ENCODE measurements at regions of chr15 and their contacts with region 1.

Region 1: DNA sequence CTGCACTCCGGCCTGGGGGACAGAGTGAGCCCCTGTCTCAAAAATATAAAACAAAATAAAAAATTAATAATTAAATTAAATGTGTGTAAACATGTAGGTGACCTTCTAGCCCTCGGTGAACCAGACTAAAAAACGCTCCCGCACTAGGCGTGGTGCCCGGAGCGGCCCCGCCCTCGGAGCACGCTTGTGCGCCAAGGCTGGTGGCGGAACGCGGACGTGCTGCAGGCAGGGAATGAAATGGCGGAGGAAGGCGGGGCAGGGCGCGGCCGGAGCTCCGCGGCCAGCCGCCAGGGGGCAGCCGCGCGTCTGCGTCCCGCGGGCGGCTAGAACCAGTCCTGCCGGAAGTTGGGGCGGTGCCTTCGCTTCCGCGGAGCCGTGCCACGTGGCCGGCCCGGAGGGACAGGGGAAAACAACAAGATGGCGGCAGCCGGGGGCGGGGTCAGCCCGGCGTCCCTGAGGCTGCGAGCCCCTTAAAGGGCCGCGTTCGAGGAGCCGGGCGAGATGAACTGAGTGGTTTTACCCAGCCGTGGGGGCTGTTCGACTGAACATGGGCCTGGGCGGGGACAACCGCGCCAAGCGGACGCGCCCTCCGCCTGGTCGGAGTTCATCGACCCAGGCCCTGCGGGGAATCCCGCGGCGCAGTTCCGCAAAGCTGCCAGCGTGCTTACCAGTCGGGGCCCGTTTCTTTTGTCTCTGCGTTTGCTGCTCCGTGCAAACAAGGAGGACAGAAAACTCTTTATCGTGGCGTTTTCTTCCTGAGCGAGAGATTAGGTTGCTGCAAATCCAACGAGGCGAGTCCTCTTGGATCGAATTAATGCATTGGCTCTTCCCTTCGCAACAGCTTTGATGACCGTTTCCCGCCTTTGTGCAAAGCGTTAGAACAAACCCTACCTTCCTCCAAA is 90.9 kb upstream of the CHD2 start:
- DNase-seq: peak; percentile 98 to 99
- H3K4me3 ChIP-seq: peak overlapping the region; percentile 46
- H3K4me3 Mint-ChIP-seq: peak overlapping the region; percentile 97
- H3K27ac Mint-ChIP-seq: peak overlapping the region; percentile 96
- H3K4me1 ChIP-seq: peaks cover 27% of the 10 kb centered on the region
- H3K4me1 Mint-ChIP-seq: peaks cover 9% of the 10 kb centered on the region
- H3K27me3 ChIP-seq: no peaks in the 10 kb centered on the region
- H3K27me3 Mint-ChIP-seq: no peaks in the 10 kb centered on the region
- CTCF ChIP-seq: peak; percentile 32 to 93

Region 2: DNA sequence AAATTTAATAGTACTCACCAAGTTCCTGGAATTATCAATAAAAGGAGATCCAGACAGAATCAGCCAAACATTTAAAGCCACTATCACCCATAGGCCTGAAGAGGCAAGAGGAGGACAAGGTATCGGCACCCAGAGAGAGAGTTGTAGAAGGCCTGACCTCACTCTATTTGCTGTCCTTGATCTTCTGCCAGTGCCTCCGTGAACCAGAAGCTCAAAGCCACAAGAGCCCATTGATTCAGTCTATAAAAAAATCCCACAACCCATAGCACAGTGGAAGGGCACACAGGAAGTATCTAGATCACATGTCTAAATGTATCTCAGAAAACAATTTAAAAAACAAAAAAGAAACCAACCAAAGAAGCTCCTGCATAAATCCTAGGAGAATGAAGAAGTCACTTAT is 85.1 kb before region 1 on chr15:
- CTCF ChIA-PET with region 1: no interaction called
- POLR2A ChIA-PET with region 1: no interaction called
- intact Hi-C with region 1: no loop called
- DNase-seq: no peak
- H3K4me3 ChIP-seq: no peak overlapping the region
- H3K4me3 Mint-ChIP-seq: no peak overlapping the region
- H3K27ac Mint-ChIP-seq: no peak overlapping the region
- H3K4me1 ChIP-seq: peaks cover 9% of the 10 kb centered on the region
- H3K4me1 Mint-ChIP-seq: peaks cover 25% of the 10 kb centered on the region
- H3K27me3 ChIP-seq: no peaks in the 10 kb centered on the region
- H3K27me3 Mint-ChIP-seq: no peaks in the 10 kb centered on the region
- CTCF ChIP-seq: no peak

Region 3: GRCh38 chr15:92780843-92781242 is 28.4 kb before region 1 on chr15:
- CTCF ChIA-PET with region 1: no interaction called
- POLR2A ChIA-PET with region 1: no interaction called
- intact Hi-C with region 1: no loop called
- DNase-seq: no peak
- H3K4me3 ChIP-seq: no peak overlapping the region
- H3K4me3 Mint-ChIP-seq: no peak overlapping the region
- H3K27ac Mint-ChIP-seq: no peak overlapping the region
- H3K4me1 ChIP-seq: no peaks in the 10 kb centered on the region
- H3K4me1 Mint-ChIP-seq: no peaks in the 10 kb centered on the region
- H3K27me3 ChIP-seq: no peaks in the 10 kb centered on the region
- H3K27me3 Mint-ChIP-seq: no peaks in the 10 kb centered on the region
- CTCF ChIP-seq: no peak

Region 4: DNA sequence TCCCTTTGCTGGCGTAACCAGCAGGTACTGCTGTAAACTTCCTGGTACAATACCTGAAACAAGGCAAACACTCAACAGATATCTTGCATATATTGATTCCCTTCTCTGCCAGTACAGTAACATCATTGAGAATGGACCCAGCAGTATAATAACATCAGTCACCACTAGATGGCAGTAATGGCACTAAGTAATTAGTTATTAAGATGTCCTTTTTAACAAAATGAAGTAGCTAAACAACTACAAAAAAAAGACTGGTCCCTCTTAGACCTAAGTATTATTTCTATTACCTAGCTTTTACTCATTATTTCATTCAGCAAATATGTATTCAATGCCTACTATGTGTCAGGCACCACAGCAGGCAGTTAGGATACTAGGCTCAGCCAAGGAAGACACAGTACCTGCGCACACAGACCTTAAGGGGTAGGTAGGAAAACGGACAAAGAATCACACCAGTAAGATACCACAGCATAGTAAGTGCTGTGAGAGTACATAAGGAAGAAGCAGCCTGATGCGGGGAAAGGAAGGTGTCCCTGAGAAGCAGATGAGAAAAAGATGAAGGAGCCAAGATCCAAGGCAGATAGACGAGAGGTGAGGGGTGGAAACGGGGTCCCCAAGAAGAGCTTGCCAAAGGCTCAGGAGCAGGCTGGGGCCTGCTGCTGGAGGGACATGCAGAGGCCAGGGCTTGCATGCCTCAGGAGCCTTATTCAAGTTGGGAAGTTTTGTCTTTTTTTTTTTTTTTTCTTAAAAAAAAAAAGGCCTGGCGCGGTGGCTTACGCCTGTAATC is 11.9 kb before region 1 on chr15:
- CTCF ChIA-PET with region 1: interaction called, 15 read pairs
- POLR2A ChIA-PET with region 1: interaction called, 16 read pairs
- intact Hi-C with region 1: loop called (anchors 1 kb)
- DNase-seq: peak in 1 of 2 experiments; percentile 77
- H3K4me3 ChIP-seq: no peak overlapping the region
- H3K4me3 Mint-ChIP-seq: peak overlapping the region; percentile 50
- H3K27ac Mint-ChIP-seq: peak overlapping the region; percentile 94
- H3K4me1 ChIP-seq: peaks cover 42% of the 10 kb centered on the region
- H3K4me1 Mint-ChIP-seq: peaks cover 17% of the 10 kb centered on the region
- H3K27me3 ChIP-seq: no peaks in the 10 kb centered on the region
- H3K27me3 Mint-ChIP-seq: no peaks in the 10 kb centered on the region
- CTCF ChIP-seq: peak; percentile 55 to 56

Region 5: DNA sequence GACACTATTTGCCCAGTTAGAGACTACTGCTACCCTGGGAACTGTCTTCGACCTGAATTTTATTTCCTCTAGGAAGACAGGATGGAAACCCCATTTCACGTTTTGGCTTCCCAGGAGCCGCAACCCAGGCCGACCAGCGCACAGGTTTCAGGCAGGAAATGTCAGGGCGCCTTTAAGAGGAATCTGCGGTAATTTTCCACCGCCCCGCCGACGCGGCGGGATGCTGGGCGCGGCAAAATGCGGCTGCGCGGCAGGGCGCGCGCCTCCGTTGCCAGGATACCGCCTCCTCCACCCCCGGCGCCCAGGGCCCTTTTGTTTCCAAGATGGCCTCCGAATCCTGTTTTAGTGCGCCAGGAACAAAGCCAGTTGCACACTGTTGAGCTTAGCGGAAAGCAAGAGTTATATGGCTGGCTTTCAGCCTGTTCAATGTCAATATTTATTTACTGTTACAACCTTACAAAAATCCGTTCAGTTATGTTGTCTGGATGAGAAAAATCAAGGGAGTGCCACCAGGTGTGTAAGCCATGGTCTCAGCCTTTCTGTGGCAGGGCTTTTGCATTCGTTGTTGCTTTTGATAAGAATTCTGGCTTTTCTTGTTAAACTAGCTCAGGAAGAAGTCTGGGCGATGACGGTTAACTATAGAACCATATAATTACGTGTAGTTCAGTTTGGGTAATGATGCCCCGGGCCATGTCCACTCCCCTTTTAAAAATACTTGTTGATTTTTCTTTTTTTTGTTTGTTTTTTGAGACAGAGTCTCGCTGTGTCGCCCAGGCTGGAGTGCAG is 11.2 kb after region 1 on chr15:
- CTCF ChIA-PET with region 1: interaction called, 4 read pairs
- POLR2A ChIA-PET with region 1: interaction called, 11 read pairs
- intact Hi-C with region 1: loop called (anchors 1 kb)
- DNase-seq: peak; percentile 93 to 95
- H3K4me3 ChIP-seq: peak overlapping the region; percentile 17
- H3K4me3 Mint-ChIP-seq: peak overlapping the region; percentile 83
- H3K27ac Mint-ChIP-seq: peak overlapping the region; percentile 94
- H3K4me1 ChIP-seq: peaks cover 38% of the 10 kb centered on the region
- H3K4me1 Mint-ChIP-seq: peaks cover 33% of the 10 kb centered on the region
- H3K27me3 ChIP-seq: no peaks in the 10 kb centered on the region
- H3K27me3 Mint-ChIP-seq: no peaks in the 10 kb centered on the region
- CTCF ChIP-seq: no peak

Region 6: DNA sequence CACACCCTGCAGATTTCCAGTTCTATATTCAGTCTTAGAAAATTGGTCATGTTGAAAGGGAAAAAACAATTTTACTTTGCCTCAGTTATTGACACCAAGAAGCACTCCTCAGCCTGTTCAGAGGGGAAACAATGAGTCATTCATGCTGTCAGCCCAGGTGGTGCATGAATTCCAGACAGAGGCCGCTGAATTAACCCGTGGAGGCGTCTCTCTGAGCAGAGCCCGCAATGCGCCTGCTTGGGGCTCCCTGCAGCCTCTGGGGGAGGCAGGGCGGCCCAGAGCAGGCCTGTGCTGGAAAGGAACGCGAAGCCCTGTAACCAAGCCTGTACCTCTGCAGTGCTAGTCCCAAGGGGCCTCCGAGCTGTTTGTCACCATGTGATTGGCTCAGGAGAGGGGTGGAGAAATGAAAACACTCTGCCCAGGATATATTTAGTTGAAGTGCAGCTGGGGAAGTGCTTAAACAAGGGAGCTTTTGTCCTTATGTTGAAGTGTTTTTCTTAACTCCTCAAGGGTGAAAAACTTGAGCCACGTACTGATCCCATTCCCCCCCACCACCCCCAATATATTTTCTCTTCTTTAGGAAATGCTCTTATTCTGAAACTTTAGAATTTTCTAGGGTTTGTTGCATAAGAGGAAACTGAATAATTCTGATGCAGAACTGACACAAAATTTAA is 22.6 kb after region 1 on chr15:
- CTCF ChIA-PET with region 1: interaction called, 4 read pairs
- POLR2A ChIA-PET with region 1: interaction called, 7 read pairs
- intact Hi-C with region 1: loop called (anchors 1 kb)
- DNase-seq: peak; percentile 94 to 96
- H3K4me3 ChIP-seq: peak overlapping the region; percentile 13; the same call in 1 of the 2 replicates
- H3K4me3 Mint-ChIP-seq: peak overlapping the region; percentile 54
- H3K27ac Mint-ChIP-seq: peak overlapping the region; percentile 66
- H3K4me1 ChIP-seq: peaks cover 22% of the 10 kb centered on the region
- H3K4me1 Mint-ChIP-seq: peaks cover 13% of the 10 kb centered on the region
- H3K27me3 ChIP-seq: no peaks in the 10 kb centered on the region
- H3K27me3 Mint-ChIP-seq: no peaks in the 10 kb centered on the region
- CTCF ChIP-seq: no peak

Region 7: DNA sequence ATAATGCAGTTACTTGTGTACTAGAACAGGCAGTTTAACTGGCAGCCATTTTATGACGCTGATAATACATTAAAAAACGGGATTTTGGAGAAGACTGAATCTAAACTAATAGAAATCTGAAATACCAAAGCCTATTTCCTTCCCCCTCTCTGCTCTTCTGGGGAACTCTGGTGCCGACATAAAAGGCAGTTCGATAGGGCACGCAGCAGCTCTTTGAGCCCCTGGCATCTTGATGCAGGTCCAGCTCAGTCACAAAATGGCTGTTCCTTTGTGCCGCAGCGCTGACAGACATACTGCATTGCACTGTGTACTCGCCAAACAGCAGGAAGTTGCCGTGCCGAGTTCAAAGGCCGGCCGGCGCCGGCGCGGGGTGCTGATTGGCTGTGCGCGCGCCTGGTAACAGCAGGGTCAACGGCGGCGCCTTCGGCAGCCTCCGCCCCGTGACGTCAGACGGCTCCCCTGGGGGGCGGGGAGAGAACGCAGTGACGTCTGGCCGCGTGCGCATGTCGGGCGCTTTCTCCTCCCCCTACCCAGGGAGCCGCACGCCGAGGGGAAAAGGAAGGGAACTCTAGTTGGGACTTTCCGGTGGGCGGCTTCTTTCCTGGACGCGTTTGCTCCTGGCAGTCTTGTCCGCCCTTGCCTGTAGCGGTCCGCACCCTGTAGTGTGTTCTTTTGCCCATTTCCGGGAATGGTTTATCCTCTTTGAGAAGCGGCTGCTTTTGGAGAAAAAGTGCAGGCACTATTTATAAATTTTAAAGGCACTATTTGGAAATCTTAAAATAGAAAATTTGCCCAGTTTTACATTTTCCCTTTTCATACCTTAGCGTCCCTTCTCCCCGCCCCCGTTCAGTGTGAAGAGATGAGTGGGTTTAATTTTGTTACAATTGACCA is 95.0 kb after region 1 on chr15:
- CTCF ChIA-PET with region 1: interaction called, 8 read pairs
- POLR2A ChIA-PET with region 1: interaction called, 25 read pairs
- intact Hi-C with region 1: loop called (anchors 1 kb)
- DNase-seq: peak; percentile 98 to 99
- H3K4me3 ChIP-seq: peak overlapping the region; percentile 51
- H3K4me3 Mint-ChIP-seq: peak overlapping the region; percentile 86
- H3K27ac Mint-ChIP-seq: peak overlapping the region; percentile 99
- H3K4me1 ChIP-seq: peaks cover 42% of the 10 kb centered on the region
- H3K4me1 Mint-ChIP-seq: peaks cover 45% of the 10 kb centered on the region
- H3K27me3 ChIP-seq: no peaks in the 10 kb centered on the region
- H3K27me3 Mint-ChIP-seq: no peaks in the 10 kb centered on the region
- CTCF ChIP-seq: no peak

Region 8: GRCh38 chr15:92917606-92918407 is 108.6 kb after region 1 on chr15:
- CTCF ChIA-PET with region 1: interaction called, 5 read pairs
- POLR2A ChIA-PET with region 1: interaction called, 19 read pairs
- intact Hi-C with region 1: loop called (anchors 1 kb)
- DNase-seq: peak; percentile 92
- H3K4me3 ChIP-seq: peak overlapping the region; percentile 10; the same call in 1 of the 2 replicates
- H3K4me3 Mint-ChIP-seq: peak overlapping the region; percentile 78
- H3K27ac Mint-ChIP-seq: peak overlapping the region; percentile 88
- H3K4me1 ChIP-seq: peaks cover 72% of the 10 kb centered on the region
- H3K4me1 Mint-ChIP-seq: peaks cover 46% of the 10 kb centered on the region
- H3K27me3 ChIP-seq: no peaks in the 10 kb centered on the region
- H3K27me3 Mint-ChIP-seq: no peaks in the 10 kb centered on the region
- CTCF ChIP-seq: peak; percentile 64 to 78

Region 9: GRCh38 chr15:93321881-93322289 is 512.7 kb after region 1 on chr15:
- CTCF ChIA-PET with region 1: no interaction called
- POLR2A ChIA-PET with region 1: interaction called, 11 read pairs
- intact Hi-C with region 1: no loop called
- DNase-seq: peak; percentile 81 to 82
- H3K4me3 ChIP-seq: peak overlapping the region; percentile 15
- H3K4me3 Mint-ChIP-seq: peak overlapping the region; percentile 70
- H3K27ac Mint-ChIP-seq: peak overlapping the region; percentile 96
- H3K4me1 ChIP-seq: peaks cover 19% of the 10 kb centered on the region
- H3K4me1 Mint-ChIP-seq: peaks cover 25% of the 10 kb centered on the region
- H3K27me3 ChIP-seq: no peaks in the 10 kb centered on the region
- H3K27me3 Mint-ChIP-seq: no peaks in the 10 kb centered on the region
- CTCF ChIP-seq: no peak